ENCODE measurements at regions of chr10 and their contacts with region 1.

Region 1: GRCh38 chr10:92527716-92528115 is 46.2 kb downstream of the IDE start:
- DNase-seq: no peak
- CTCF ChIP-seq: no peak

Region 2: DNA sequence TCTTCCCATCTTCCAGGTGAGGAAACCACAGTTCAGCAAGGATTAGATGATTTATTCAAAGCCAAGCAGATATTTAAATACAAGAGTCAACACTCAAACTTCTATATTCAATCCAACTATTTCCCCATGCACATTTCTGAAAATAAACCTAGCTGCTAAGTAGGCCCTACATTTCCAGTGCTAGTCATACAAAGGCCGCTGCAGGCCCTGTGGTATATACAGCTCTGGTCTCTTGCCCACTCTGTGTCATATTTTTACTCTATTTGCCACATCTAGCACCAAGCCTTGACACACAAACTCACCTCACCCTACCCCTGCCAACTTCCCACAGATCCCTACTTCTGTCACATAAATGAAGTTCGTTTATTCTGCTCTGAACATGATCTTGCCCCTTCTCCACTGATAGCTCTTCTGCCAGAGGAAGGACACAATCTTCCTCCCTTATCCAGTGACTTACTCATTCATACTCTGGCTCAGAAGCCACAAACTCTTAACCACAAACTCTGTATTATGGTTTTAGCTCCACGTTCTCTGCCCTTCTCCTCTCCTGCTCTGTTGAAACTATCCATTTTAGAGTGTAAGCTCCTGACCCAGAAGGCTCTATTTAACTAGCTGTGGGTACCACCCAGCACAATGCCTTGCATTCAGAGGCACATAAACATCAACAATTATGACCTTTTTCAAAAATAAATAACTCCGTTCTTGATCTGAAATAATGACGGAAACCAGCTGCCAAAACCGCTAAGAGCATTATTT is 417.5 kb before region 1 on chr10:
- in situ Hi-C with region 1: no loop called
- DNase-seq: no peak
- CTCF ChIP-seq: no peak

Region 3: DNA sequence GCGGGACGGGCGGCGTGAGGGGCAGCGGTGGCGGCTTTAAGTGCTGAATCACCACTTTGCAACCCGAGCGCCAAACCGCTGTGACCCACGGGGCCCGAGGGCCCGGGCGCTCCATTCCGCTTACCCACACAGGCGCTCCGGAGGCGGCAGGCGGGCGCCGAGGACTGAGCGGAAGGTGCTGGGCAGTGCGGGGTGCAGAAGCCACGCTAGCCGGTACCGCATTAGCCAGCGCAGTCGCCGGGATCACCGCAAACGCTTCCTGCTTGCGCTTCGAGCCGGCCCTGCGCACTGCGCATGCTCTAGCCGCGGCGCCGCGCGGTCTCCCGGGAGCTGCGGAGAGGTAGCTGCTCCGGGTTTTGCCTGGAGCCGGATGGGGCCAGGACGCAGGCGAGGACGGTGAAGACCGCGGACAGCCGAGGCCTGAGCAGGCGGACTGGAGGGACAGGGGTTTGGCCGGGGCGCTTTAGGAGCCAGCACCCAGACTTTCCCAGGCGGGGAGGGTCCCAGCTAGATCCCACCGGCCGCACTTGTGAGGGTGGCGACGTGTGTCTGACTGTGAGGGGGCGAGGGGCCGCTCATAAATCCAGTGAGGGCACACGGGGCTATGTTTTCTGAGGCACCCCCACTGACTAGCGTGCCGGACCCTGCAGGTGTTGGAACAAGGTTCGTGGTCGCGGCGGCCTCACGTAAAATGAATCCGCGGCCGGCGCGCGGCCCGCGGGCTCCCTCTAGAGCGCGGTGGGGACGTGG is 46.3 kb after region 1 on chr10 and contains the start of gene IDE:
- in situ Hi-C with region 1: loop called (anchors 10 kb)
- DNase-seq: peak; percentile 91
- CTCF ChIP-seq: peak; percentile 97

Measured in GM13977 (cell line).